ENCODE measurements at regions of chr12 and their contacts with region 1.

Region 1: DNA sequence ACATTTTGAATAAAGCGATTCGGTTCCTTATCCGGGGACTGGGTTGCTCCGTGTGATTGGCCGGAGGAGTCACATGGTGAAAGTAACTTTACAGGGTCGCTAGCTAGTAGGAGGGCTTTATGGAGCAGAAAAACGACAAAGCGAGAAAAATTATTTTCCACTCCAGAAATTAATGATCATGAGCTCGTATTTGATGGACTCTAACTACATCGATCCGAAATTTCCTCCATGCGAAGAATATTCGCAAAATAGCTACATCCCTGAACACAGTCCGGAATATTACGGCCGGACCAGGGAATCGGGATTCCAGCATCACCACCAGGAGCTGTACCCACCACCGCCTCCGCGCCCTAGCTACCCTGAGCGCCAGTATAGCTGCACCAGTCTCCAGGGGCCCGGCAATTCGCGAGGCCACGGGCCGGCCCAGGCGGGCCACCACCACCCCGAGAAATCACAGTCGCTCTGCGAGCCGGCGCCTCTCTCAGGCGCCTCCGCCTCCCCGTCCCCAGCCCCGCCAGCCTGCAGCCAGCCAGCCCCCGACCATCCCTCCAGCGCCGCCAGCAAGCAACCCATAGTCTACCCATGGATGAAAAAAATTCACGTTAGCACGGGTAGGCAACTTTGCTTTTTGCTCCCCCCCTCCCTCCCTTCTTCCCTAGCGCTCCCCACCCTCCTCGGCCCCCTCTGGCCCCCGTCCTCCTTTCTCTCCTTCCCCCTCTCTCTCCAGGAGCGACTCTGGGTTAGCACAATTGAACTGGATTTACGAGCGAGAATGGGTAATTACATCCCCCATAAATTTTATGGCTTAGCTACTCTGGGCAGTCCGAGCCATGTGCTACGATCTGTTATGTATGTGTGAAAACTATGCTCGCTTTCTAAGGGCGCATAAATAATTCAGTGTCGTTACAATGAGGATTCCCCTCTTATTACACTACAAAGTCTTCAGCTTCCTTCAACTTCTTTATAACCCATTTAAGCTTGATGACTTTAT is at the start of gene HOXC4:
- H3K4me3 ChIP-seq: peak within 1 kb of the TSS; percentile 54
- H3K27ac ChIP-seq: peak within 1 kb of the TSS; percentile 99
- H3K4me1 ChIP-seq: peaks cover 73% of the 10 kb centered on the region
- CTCF ChIP-seq: peak; percentile 26; the same call in 1 of the 2 replicates

Region 2: GRCh38 chr12:54017878-54018467 is 36.1 kb before region 1 on chr12:
- CTCF ChIA-PET with region 1: no interaction called
- POLR2A ChIA-PET with region 1: interaction called, 12 read pairs
- H3K4me3 ChIP-seq: peak overlapping the region; percentile 81
- H3K27ac ChIP-seq: peak overlapping the region; percentile 100
- H3K4me1 ChIP-seq: peaks cover 49% of the 10 kb centered on the region
- CTCF ChIP-seq: no peak

Region 3: DNA sequence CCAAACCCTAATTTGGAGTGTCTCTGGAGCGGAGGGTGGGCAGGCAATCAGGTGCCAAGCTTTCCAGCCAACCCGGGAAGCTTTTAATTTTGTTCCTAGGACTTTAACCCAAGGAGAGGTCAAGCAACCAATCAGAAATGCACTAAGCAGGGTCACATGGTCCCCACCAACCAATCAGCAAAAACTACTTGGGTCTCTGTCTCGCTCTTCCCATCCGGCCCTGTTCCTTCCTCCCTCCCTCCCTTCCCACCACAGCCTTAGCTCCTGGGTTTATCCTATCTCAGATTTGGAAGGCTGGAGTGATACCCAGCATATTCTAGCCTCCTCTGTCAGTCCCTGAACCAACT is 13.9 kb before region 1 on chr12:
- CTCF ChIA-PET with region 1: interaction called, 5 read pairs
- POLR2A ChIA-PET with region 1: interaction called, 18 read pairs
- H3K4me3 ChIP-seq: no peak overlapping the region
- H3K27ac ChIP-seq: peak overlapping the region; percentile 100
- H3K4me1 ChIP-seq: peaks cover 72% of the 10 kb centered on the region
- CTCF ChIP-seq: no peak

Region 4: GRCh38 chr12:54134850-54135249 is 80.8 kb after region 1 on chr12:
- CTCF ChIA-PET with region 1: interaction called, 12 read pairs
- POLR2A ChIA-PET with region 1: interaction called, 7 read pairs
- H3K4me3 ChIP-seq: no peak overlapping the region
- H3K27ac ChIP-seq: peak overlapping the region; percentile 17; the same call in 1 of the 2 replicates
- H3K4me1 ChIP-seq: peaks cover 12% of the 10 kb centered on the region
- CTCF ChIP-seq: peak; percentile 70

Measured in HEK293 (cell line).